ENCODE measurements at regions of chr10 and their contacts with region 1.

Region 1: DNA sequence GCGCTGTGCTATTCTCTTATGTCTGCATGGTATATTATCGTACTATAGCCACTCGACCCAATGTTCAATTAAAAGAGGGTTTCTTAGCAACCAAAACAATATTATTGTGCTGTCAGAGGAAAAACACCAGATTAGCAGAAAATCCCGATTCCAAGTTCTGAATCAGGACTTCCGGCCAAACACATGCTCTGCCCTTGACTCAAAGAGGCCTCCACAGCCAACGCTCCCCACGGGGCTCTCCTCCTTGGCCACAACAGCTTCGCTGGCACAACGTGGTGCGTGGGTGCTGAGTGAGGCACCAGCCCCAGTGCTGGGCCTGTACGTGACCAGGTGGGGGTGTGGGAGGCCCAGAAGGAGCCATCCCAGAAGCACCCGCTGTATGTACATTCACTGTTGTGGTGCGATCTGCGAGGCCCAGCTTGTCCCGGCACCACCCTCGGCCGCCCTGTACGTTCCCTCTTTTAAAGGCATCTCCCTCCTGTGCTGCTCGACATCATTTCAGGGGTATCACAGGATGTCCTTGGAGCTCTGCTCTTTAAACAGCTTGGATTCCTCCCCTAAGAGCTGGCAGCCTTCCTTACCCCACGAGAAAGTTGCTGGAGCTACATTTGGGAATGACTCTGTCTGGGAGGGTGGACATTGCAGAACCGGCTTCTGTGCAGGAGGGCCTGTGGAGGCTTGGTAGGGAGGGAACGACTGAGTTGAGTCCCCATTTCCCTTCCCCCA is 736.2 kb downstream of the PARD3 start:
- DNase-seq: peak; percentile 70 to 92
- H3K4me3 ChIP-seq: peak overlapping the region in 1 of 2 donors; percentile 5
- H3K27ac ChIP-seq: peak overlapping the region; percentile 62 to 77
- H3K4me1 ChIP-seq: peaks cover 7 to 13% of the 10 kb centered on the region in 2 donors
- H3K27me3 ChIP-seq: no peaks in the 10 kb centered on the region
- CTCF ChIP-seq: peak in 1 of 3 experiments; percentile 33

Region 2: DNA sequence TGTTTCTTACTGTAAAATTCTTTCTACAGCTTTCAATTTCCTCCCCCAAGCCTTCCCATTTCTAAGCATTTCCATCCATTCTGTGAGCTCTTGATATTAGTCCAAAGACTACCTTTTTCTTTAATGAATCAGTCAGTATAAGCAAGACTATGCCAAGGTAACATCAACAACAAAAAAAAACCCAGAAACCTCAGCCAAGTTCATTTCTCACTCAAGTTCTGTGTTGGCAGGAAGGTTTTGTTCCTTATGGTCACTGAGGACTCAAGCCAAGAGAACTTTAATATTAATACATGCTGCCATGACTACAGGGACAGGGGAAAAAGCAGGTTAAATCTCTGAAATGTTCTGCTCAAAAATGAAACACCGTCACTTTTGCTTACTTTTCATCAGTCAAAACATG is 123.2 kb before region 1 on chr10:
- intact Hi-C with region 1: loop called (anchors 5 kb)
- DNase-seq: no peak
- H3K4me3 ChIP-seq: no peak overlapping the region
- H3K27ac ChIP-seq: no peak overlapping the region
- H3K4me1 ChIP-seq: no peaks in the 10 kb centered on the region
- H3K27me3 ChIP-seq: no peaks in the 10 kb centered on the region
- CTCF ChIP-seq: no peak

Region 3: GRCh38 chr10:34102237-34102673 is 23.3 kb after region 1 on chr10:
- intact Hi-C with region 1: loop called (anchors 1 kb)
- DNase-seq: peak in 1 of 2 donors; percentile 86
- H3K4me3 ChIP-seq: peak overlapping the region in 1 of 2 donors; percentile 44
- H3K27ac ChIP-seq: peak overlapping the region; percentile 84 to 85
- H3K4me1 ChIP-seq: peaks cover 7 to 33% of the 10 kb centered on the region in 2 donors
- H3K27me3 ChIP-seq: no peaks in the 10 kb centered on the region
- CTCF ChIP-seq: no peak

Region 4: DNA sequence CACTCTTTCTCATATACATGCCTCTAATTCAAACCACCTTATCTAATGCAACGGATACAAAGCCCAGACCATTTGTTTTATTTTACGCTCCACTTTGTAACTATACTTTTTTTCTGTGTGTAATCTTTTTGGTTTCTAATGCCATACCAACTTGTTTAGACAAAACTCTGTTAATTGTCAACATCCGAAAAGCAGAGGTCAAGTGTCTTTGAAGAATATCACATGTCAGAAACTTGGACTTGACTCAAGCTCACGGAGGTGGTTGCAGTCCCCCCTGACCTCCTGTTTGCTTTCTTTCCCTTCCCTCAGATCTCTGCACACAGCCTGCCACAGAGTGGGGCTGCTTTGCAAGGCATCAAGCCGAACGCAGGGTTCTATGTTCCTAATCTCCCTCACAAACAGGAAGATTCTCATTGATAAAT is 37.3 kb after region 1 on chr10:
- intact Hi-C with region 1: no loop called
- DNase-seq: no peak
- H3K4me3 ChIP-seq: peak overlapping the region in 1 of 2 donors; percentile 50
- H3K27ac ChIP-seq: no peak overlapping the region
- H3K4me1 ChIP-seq: peaks cover 0 to 3% of the 10 kb centered on the region in 2 donors
- H3K27me3 ChIP-seq: no peaks in the 10 kb centered on the region
- CTCF ChIP-seq: no peak

Region 5: DNA sequence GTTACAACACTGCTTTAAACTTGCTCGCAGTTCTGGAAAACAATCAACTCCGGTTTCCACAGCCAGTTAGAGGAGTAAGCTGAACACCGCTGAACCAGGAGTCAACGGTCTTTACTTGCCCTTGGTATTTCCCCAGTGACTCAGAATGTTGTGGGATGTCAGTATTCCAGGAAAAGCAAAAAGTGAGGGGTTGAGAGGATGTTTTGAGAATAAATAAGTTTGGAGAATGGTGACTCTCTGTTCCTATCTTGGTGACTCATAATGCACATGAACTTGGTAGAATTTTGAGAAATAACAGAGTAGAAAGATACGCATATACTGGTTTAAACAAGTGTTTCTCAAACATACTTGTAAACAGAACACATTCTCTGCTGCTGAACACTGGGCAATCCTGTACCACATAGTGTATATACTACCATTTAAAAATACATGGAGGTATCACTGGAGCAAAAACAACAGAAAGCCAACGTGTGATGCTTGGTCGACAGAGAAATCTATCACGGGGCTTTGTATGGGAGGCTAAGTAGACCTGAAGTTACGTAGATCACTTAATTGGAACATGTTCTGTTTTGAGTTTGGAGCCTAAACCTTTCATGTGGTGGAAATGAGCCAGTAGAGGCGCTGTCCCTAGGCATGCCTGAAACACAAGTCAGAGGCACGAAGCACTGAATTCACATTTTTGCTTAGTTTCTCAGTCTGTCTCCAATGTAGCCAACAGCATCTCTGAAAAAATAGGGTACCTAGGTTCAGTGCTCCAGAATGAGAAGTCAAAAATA is 201.9 kb after region 1 on chr10:
- intact Hi-C with region 1: loop called (anchors 5 kb)
- DNase-seq: peak in 1 of 2 donors; percentile 77
- H3K4me3 ChIP-seq: peak overlapping the region; percentile 10 to 22
- H3K27ac ChIP-seq: peak overlapping the region; percentile 57 to 74
- H3K4me1 ChIP-seq: peaks cover 0 to 27% of the 10 kb centered on the region in 2 donors
- H3K27me3 ChIP-seq: no peaks in the 10 kb centered on the region
- CTCF ChIP-seq: peak in 1 of 3 experiments; percentile 35